BJ (cell line): ENCODE measurements at regions of chr17 and their contacts with region 1.

Region 1: DNA sequence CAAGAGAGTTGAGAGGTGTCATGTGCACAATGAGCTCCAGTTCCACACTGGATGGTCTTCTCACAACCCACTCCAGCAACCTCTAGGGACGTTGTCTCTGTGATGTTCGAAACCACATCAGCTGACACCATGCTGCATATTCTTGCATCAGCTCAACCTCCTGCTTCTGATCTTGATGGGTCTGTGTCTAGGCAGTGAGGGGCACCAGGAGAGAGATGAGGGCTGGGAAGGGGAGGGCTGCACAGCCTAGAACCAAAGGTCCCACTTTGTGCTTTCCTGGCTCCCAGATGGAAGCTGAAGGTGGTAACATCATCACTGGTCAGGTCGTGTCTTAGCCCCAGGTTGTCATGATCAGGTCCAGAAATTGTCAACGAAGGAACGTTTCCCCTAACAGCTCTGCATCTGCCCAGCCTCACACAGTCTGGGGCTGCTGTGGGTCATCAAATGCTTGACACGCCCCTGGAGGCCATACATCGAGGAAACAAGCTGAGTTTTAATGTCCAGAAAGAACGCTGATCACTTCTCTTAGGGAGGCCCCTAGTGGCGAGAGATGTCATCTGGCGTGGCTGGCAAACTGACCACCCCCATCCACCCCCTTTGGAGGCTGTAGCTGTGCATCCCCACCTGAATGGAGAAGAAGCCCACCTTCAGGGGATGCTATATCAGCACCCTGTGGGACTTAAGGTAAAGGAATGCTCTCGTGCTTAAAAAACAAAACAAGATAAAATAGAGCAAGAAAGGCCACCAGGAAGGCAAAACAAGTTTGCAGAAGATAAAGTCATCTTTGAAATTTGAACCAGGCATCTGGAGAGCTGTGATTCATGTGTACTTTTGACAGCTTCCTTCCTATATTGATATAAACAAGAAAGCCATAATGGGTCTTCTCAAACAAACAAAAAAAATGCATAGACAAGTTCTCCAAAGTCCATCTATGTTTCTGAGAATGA is 58.3 kb downstream of the WIPI1 start:
- DNase-seq: no peak
- H3K4me3 ChIP-seq: no peak overlapping the region
- H3K27me3 ChIP-seq: no peaks in the 10 kb centered on the region
- CTCF ChIP-seq: peak; percentile 89

Region 2: DNA sequence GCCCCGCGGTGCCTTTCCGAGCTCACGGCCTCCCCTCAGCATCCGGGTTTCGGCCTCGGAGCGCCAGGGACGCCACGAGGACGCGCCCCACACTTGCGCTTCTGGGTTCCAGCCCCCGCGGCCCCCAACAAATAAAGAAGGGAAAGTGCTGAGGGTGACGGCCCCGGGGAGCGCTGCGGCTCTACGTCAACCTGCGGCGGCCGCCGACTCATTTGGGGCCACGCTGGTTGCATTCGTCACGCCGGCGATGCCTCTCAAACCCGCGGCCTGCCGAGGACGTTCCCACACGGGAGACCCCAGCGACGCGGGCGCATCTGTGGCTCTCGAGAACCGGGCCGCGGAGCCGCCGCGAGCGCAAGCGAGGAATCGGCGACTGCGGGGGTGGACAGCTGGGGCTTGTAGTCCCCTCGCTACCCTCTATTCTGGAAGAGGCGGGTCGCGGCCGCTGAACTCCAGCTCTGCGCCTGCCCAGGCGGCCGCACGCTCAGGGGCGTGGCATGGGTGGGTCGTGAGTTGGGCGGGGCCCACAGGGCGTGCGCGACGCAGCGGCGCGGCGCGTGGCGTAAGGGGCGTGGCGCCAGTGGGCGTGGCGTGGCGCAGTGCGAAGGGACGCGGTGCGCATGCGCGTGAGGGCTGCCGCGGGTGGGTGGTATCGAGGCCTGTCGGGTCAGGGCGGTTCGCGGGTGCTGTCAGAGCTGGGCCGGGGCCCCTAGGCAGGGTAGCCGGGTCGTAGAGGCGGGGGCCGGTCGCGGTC is 151.3 kb before region 1 on chr17 and contains the start of gene AMZ2:
- CTCF ChIA-PET with region 1: interaction called, 14 read pairs
- POLR2A ChIA-PET with region 1: interaction called, 3 read pairs
- DNase-seq: peak; percentile 61
- H3K4me3 ChIP-seq: peak within 1 kb of the TSS; percentile 61
- H3K27me3 ChIP-seq: no peaks in the 10 kb centered on the region
- CTCF ChIP-seq: no peak
- polyA plus RNA-seq, gene AMZ2: 52.0 and 91.1 TPM in 2 replicates

Region 3: GRCh38 chr17:68314916-68315535 is 83.9 kb before region 1 on chr17:
- CTCF ChIA-PET with region 1: interaction called, 11 read pairs
- POLR2A ChIA-PET with region 1: no interaction called
- DNase-seq: no peak
- H3K4me3 ChIP-seq: no peak overlapping the region
- H3K27me3 ChIP-seq: no peaks in the 10 kb centered on the region
- CTCF ChIP-seq: no peak

Region 4: DNA sequence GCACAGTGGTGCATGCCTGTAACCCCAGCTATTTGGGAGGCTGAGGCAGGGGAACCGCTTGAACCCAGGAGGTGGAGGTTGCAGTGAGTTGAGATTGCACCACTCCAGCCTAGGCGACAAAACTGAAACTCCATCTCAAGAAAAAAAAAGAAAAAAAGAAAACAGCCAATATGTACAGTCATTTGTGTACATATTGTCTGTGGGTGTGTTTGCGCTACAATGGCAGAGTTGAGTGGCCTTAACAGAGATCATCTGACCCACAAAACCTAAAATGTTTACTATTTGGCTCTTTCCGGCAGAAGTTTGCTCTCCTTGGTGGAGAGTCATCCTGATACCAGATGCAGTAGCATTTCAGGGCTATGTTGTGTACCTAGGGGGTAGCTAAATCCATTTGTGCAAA is 49.8 kb before region 1 on chr17:
- CTCF ChIA-PET with region 1: interaction called, 22 read pairs
- POLR2A ChIA-PET with region 1: no interaction called
- DNase-seq: no peak
- H3K4me3 ChIP-seq: no peak overlapping the region
- H3K27me3 ChIP-seq: no peaks in the 10 kb centered on the region
- CTCF ChIP-seq: no peak

Region 5: DNA sequence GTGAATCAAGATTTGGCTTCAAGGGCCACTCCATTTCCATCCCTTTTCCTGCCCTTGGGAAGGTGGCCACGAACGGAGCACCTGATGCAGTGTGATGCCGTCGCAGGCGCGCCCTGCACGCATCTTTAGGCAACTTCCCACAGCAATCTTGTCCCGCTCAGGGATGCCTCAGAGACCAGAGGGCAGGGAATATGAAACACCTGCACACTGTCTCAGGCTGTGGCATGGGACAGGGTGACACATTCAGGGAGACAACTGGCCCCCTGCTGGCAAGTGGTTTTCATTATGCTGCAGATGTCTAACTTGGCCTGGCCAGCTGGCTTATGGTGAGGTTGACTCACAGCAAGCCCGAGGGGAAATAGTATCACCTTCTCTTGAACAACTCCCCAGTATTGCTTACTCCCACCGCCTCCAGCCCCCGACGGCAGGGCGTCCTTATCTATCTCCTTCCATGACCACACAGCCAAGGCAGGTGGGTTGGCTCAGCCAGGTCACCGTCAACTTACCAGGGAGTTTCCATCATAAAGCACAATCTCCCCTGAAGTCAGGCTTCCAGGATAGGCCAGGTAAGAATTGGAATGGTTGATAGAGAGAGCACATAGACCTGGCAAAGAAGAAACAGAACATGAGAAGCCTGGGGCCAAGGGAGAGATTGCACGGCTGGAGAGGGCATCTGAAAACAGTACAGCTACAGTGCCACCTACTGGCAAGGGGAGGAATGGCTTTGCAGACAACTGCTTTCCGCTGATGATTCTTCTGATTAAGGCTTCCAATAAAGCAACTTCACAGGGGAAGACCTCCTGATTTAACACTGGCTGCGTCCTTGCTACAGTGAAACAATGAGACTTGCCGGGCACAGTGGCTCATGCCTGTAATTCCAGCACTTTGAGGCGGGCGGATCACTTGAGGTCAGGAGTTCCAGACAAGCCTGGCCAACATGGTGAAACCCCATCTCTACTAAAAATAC is 37.2 kb after region 1 on chr17:
- CTCF ChIA-PET with region 1: interaction called, 20 read pairs
- POLR2A ChIA-PET with region 1: no interaction called
- DNase-seq: peak; percentile 55
- H3K4me3 ChIP-seq: no peak overlapping the region
- H3K27me3 ChIP-seq: no peaks in the 10 kb centered on the region
- CTCF ChIP-seq: peak; percentile 93